GM10248 (cell line): ENCODE measurements at regions of chr10 and their contacts with region 1.

Region 1: DNA sequence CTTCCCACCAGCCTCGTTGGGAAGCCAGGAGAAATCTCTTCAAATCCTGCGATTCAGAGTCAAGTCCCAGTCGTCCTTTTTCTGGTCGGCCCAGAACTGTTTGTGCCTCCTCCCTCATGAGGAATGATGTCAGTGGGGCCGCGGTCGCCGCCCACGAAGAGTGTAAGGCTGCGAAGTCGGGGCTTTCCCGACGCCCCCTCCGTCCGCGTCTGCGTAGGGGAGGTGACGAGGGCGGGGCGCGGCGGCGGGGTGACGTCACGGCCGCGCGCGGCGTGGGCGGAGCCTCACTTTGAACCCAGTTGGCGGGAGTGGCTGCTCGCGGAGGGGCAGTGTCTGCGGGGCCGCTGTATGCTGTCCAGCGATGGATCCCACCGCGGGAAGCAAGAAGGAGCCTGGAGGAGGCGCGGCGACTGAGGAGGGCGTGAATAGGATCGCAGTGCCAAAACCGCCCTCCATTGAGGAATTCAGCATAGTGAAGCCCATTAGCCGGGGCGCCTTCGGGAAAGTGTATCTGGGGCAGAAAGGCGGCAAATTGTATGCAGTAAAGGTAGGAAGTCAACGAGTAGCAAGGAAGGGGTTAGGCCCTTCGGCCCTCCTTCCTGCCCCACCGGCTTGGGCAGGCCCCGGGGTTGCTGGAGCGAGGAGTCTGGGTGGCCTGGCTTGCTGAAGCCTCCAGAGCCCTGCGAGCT is at the start of gene MASTL:
- DNase-seq: peak; percentile 96
- CTCF ChIP-seq: no peak

Region 2: GRCh38 chr10:26946102-26946811 is 209.0 kb before region 1 on chr10:
- CTCF ChIA-PET with region 1: no interaction called
- POLR2A ChIA-PET with region 1: no interaction called
- DNase-seq: no peak
- CTCF ChIP-seq: no peak

Region 3: GRCh38 chr10:27143686-27144085 is 11.5 kb before region 1 on chr10:
- CTCF ChIA-PET with region 1: interaction called, 21 read pairs
- POLR2A ChIA-PET with region 1: interaction called, 8 read pairs
- DNase-seq: no peak
- CTCF ChIP-seq: no peak